K562 (cell line): ENCODE measurements at regions of chr15 and their contacts with region 1.

Region 1: DNA sequence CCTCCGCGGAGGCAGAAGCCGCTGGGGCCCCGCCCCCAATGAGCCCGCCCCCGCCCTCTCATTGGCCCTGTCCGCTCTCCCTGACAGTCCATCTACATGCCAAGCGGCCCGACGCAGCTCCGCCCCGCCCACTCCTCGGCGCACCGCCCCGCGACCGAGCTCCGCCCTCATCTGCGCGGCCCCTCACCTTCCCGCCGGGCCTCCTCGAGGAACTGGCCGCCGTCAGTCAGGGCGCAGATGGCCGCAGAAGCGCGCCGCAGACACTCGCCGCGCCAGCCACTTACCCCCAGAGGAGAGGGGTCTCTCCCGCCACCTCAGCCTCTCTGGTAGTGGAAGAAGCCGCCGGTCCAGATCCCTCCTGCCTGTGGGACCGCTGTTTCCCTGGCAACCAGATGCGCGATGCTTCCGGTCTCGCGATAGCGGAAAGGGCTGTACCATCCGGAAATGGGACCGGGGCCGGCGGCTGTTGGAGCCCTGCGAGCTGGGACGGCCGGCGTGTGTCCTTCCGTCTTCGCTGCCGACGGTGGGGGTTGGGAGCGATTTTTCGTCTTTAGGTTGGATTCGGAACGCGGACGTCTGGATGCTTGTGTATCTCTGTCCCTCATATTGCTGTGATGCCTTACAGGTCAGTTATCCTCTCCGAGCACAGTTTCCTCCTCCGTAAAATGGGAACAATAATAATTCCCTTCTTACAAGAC is at the start of gene FSIP1:
- DNase-seq: peak; percentile 97 to 98 (median 98)
- ATAC-seq: peak; percentile 99
- H3K4me3 ChIP-seq: peak within 1 kb of the TSS; percentile 78
- H3K27ac ChIP-seq: peak within 1 kb of the TSS; percentile 74
- H3K4me1 ChIP-seq: peaks cover 0 to 8% of the 10 kb centered on the region in 2 experiments; a peak in 3 of 5 replicates
- H3K27me3 ChIP-seq: no peaks in the 10 kb centered on the region
- CTCF ChIP-seq: peak in 1 of 3 experiments; percentile 30; a peak in 1 of 6 replicates
- EP300 ChIP-seq: no peak
- POLR2A ChIP-seq: peak; percentile 76
- RAD21 ChIP-seq: no peak
- polyA plus RNA-seq, gene FSIP1: 0.07 to 0.20 TPM

Region 2: DNA sequence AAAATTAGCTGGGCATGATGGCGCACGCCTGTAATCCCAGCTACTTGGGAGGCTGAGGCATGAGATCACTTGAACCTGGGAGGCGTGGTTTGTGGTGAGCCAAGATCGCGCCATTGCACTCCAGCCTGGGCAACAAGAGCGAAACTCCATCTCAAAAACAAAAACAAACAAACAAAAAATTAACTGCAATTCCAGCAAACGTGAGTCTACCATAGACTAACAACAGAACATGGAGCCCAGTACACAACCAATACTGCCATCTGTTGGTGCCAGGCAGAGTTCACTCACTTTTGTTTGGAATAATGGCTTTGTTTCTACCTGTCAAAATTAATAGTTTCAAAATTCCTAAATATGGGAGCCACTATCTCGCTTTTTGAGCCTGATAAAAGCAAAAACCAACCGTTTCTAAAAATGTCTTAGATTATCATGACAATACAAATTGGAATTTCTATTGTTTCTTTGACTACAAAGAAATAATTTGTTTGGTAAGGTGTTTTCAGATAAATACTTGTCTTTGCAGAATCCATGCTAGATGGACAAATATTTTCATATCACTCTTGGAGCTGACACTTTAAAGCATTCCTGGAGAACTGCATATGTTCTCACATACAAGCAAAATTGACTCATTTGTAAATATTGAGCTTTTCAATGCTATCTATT is 92.4 kb after region 1 on chr15:
- CTCF ChIA-PET with region 1: interaction called, 7 read pairs
- POLR2A ChIA-PET with region 1: no interaction called
- in situ Hi-C with region 1: no loop called
- intact Hi-C with region 1: loop called (anchors 1 kb)
- DNase-seq: peak in 1 of 4 experiments; percentile 31
- ATAC-seq: peak; percentile 67
- H3K4me3 ChIP-seq: no peak overlapping the region
- H3K27ac ChIP-seq: no peak overlapping the region
- H3K4me1 ChIP-seq: peaks cover 3 to 7% of the 10 kb centered on the region in 2 experiments; a peak in 1 of 5 replicates
- H3K27me3 ChIP-seq: no peaks in the 10 kb centered on the region
- CTCF ChIP-seq: peak; percentile 57 to 71 (median 59)
- EP300 ChIP-seq: no peak
- POLR2A ChIP-seq: no peak
- RAD21 ChIP-seq: peak; percentile 65 to 75

Region 3: GRCh38 chr15:39920510-39921273 is 138.1 kb after region 1 on chr15:
- CTCF ChIA-PET with region 1: interaction called, 3 read pairs
- POLR2A ChIA-PET with region 1: interaction called, 3 read pairs
- in situ Hi-C with region 1: loop called (anchors 5 kb)
- intact Hi-C with region 1: loop called (anchors 5 kb)
- DNase-seq: peak; percentile 82 to 91 (median 88)
- ATAC-seq: peak; percentile 95
- H3K4me3 ChIP-seq: peak overlapping the region; percentile 46
- H3K27ac ChIP-seq: peak overlapping the region; percentile 80
- H3K4me1 ChIP-seq: peaks cover 13 to 18% of the 10 kb centered on the region in 2 experiments; a peak in 4 of 5 replicates
- H3K27me3 ChIP-seq: no peaks in the 10 kb centered on the region
- CTCF ChIP-seq: peak in 1 of 3 experiments; percentile 3; a peak in 1 of 6 replicates
- EP300 ChIP-seq: no peak
- POLR2A ChIP-seq: peak; percentile 78
- RAD21 ChIP-seq: peak in 1 of 2 experiments; percentile 14; a peak in 1 of 4 replicates

Region 4: GRCh38 chr15:40010686-40011085 is 228.1 kb after region 1 on chr15:
- CTCF ChIA-PET with region 1: no interaction called
- POLR2A ChIA-PET with region 1: no interaction called
- in situ Hi-C with region 1: loop called (anchors 25 kb)
- intact Hi-C with region 1: no loop called
- DNase-seq: no peak
- ATAC-seq: no peak
- H3K4me3 ChIP-seq: no peak overlapping the region
- H3K27ac ChIP-seq: no peak overlapping the region
- H3K4me1 ChIP-seq: no peaks in the 10 kb centered on the region
- H3K27me3 ChIP-seq: no peaks in the 10 kb centered on the region; a peak in 1 of 5 replicates
- CTCF ChIP-seq: no peak
- EP300 ChIP-seq: no peak
- POLR2A ChIP-seq: no peak
- RAD21 ChIP-seq: no peak

Region 5: DNA sequence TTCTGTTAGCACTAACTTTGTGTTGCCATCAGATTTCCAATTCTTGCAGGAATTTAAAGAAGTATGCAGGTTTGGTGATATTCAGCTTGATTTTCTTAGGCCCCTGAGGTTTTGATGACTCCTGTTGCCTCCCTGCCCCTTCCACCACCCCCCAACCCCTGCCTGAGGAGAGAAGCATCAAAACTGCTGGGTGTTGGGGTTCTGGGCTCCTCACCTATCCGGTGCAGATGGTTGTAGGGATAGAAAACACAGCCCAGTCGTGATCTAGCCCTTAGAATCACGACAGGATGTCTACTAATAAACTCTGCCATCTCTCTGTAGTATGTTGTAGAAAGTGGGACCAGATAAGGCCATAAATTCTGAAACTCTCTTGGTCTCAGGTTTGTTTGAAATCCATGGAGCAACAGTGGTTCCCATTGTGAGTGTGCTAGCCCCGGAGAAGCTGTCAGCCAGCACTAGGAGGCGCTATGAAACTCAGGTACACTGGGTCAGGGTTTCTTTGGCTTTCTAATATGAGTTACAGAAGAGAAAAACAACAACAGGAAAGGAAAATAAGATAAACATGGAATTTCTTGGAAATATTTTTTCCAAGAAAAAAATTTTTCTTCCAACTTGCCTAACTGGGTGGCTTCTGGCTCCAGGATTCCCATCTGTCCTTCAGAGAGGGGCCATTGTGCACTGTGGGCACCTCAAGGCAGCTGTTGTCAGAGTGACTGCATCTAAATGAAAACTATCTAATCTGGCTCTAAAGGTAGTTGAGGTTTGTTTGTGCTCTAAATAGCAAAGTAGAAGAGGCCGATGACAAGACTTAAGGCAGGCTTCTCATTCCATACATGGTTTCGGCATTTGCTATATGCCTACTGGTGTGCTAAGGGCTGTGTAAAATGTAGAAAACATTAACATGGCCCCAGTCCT is 247.6 kb after region 1 on chr15:
- CTCF ChIA-PET with region 1: no interaction called
- POLR2A ChIA-PET with region 1: interaction called, 3 read pairs
- in situ Hi-C with region 1: no loop called
- intact Hi-C with region 1: loop called (anchors 5 kb)
- DNase-seq: peak; percentile 37 to 59 (median 40)
- ATAC-seq: peak; percentile 92
- H3K4me3 ChIP-seq: no peak overlapping the region
- H3K27ac ChIP-seq: no peak overlapping the region
- H3K4me1 ChIP-seq: no peaks in the 10 kb centered on the region
- H3K27me3 ChIP-seq: no peaks in the 10 kb centered on the region
- CTCF ChIP-seq: peak; percentile 67 to 78 (median 74)
- EP300 ChIP-seq: no peak
- POLR2A ChIP-seq: no peak
- RAD21 ChIP-seq: peak in 1 of 2 experiments; percentile 60; a peak in 3 of 4 replicates